Psoas muscle (tissue), 8 donors: ENCODE measurements at regions of chr12 and their contacts with region 1.

Region 1: DNA sequence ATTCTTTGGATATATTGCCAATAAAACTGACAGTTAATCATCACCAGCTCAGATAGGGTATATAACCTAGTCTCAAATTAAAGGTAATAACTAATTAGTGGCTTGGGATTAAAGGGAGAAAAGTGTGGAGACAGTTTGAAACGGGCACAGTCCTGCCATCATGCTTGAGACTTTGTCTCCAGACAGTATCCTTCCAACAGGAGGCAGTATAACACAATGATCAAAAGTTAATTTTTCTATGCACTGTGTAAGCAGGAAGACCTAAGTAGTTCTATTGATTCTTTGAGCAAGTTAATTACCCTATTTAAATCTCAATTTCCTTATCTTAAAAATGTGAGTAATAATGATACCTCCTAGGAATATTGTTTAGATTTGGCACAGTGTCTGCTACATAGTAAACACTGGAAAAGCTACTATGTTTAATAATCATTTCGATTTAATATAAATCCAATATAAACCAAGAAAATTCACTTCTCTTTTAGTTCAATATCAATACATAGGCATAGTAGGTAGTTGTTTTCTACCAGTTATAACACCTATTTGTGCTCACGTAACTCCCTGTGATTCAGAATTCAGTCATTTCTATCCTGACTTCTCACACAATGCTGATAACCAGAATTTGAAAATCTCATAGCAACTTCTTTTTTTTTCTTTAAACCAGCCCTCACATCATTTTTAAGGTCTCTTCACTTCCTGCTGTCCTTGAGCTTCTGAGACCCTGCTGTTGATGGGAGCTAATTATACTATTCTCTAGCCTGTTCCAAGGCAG is 53.7 kb downstream of the GALNT4 start:
- DNase-seq: no peak
- ATAC-seq: peak; percentile 57 to 77 (median 66)
- H3K4me3 ChIP-seq: no peak overlapping the region
- H3K27ac ChIP-seq: no peak overlapping the region
- H3K4me1 ChIP-seq: no peaks in the 10 kb centered on the region
- H3K27me3 ChIP-seq: no peaks in the 10 kb centered on the region
- CTCF ChIP-seq: peak; percentile 60

Region 2: DNA sequence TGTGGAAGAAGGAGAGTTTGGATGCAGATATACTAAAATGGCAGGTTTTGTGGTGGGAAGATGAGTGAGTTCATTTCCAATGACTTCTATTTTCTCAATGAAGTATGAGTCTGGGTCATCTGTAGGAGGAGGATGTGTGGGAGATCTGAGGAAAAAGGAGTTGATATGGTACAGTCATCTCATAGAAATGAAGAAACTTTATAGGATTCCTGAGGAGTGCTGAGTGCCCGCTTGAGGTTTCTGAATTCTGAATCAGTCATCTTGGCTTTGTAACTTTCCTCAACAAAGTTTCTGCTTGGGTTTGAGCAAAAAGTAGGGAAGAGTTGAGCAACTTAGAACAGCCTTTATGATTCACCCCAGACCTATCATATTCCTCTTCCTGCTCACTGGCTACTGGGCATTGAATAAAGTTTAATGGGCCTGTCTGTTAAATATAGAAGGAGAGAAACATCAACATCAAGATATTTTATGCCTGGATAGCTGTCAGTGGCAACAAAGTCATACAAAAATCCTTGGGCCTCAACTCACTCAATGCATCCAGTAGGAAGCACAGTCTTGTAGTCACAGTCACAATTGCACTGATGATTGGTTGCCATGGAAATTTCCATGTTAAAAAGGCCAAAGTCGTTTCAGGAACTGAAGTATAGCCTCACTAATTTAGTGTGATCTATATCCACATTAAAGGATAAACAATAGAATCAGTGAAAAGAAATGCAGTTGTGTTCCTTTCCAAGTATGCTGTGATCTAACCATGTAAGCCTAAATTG is 403.3 kb before region 1 on chr12:
- intact Hi-C with region 1: no loop called
- DNase-seq: no peak
- ATAC-seq: no peak
- H3K4me3 ChIP-seq: no peak overlapping the region
- H3K27ac ChIP-seq: no peak overlapping the region
- H3K4me1 ChIP-seq: no peaks in the 10 kb centered on the region
- H3K27me3 ChIP-seq: no peaks in the 10 kb centered on the region
- CTCF ChIP-seq: no peak

Region 3: DNA sequence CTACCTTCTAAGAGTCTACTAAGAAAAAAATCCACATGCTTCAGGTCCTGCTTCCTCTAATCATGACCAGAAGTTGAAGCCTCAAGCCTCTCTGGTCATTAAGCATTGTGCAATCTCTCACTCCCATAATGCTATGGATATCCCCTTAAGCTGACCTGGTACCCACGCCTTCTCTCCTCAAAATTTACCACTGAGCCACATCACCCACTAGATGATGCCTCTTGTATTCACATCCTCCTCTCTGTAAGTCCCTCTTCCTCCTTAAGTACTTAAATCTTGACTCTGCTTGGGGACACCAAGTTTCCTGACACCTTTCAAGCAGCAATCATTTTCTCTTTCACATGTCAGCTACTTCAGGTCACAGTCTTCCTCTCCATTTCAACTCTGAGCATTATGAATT is 43.8 kb after region 1 on chr12:
- intact Hi-C with region 1: no loop called
- DNase-seq: no peak
- ATAC-seq: no peak
- H3K4me3 ChIP-seq: no peak overlapping the region
- H3K27ac ChIP-seq: no peak overlapping the region
- H3K4me1 ChIP-seq: no peaks in the 10 kb centered on the region
- H3K27me3 ChIP-seq: no peaks in the 10 kb centered on the region
- CTCF ChIP-seq: no peak

Region 4: GRCh38 chr12:89529738-89530137 is 58.8 kb after region 1 on chr12:
- intact Hi-C with region 1: loop called (anchors 2 to 5 kb)
- DNase-seq: no peak
- ATAC-seq: no peak
- H3K4me3 ChIP-seq: no peak overlapping the region
- H3K27ac ChIP-seq: no peak overlapping the region
- H3K4me1 ChIP-seq: peaks cover 7% of the 10 kb centered on the region
- H3K27me3 ChIP-seq: no peaks in the 10 kb centered on the region
- CTCF ChIP-seq: peak; percentile 69

Region 5: GRCh38 chr12:89733579-89734201 is 262.8 kb after region 1 on chr12:
- intact Hi-C with region 1: no loop called
- DNase-seq: no peak
- ATAC-seq: peak in 1 of 4 donors; percentile 24
- H3K4me3 ChIP-seq: no peak overlapping the region
- H3K27ac ChIP-seq: no peak overlapping the region
- H3K4me1 ChIP-seq: no peaks in the 10 kb centered on the region
- H3K27me3 ChIP-seq: no peaks in the 10 kb centered on the region
- CTCF ChIP-seq: no peak